Sciatic nerve (tissue), 2 donors: ENCODE measurements at regions of chr6 and their contacts with region 1.

Region 1: GRCh38 chr6:41167173-41167963 is 4.5 kb upstream of the TREM2 start:
- DNase-seq: no peak
- ATAC-seq: no peak

Region 2: GRCh38 chr6:41000248-41000647 is 167.1 kb before region 1 on chr6:
- intact Hi-C with region 1: loop called (anchors 5 kb)
- DNase-seq: no peak
- ATAC-seq: no peak